ENCODE measurements at regions of chr20 and their contacts with region 1.

Region 1: GRCh38 chr20:20083807-20084206 is 31.5 kb downstream of the CFAP61 start:
- DNase-seq: peak; percentile 64
- ATAC-seq: peak; percentile 87
- H3K4me3 ChIP-seq: no peak overlapping the region
- H3K27ac ChIP-seq: no peak overlapping the region
- H3K4me1 ChIP-seq: no peaks in the 10 kb centered on the region
- H3K27me3 ChIP-seq: peaks cover 60% of the 10 kb centered on the region
- CTCF ChIP-seq: peak; percentile 79

Region 2: DNA sequence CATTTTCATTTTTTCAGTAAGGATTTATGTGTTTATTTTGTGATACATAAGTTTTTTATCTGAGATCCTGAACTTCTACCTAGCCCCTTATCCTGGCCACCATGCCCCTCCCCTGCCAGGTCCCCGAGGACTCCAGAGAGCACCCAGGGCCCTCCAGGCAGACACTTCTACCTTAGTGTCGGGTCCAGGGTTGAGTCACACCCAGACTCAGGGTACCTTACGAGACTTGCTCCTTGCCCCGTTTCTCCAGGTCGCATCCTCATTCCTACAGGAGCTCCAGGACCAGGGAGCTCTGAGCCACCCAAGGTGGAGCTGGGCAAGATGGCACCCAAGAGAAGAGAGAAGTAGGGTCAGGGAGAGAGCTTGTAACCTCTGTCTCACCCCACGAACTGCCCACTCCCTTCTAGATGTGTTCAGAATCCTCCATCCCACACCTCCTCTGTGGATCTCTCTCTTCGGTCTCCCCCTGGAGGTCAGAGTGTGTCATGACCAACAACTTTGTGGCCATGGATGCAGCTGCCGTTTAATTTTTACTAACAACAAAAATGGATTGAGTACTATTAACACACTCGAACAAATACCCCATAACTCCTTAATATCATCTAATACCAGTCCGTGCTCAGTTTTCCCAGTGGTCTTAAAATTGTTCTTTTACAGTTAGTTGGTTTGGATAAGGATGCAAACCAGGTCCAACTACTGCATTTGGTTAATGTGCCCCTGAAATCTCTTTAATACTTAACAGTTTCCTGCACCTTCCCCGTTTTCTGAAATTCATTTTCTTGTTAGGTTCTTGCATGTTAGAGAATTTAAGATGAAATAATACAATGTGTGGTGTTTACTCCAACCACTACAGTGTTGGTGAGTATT is 153.5 kb after region 1 on chr20:
- CTCF ChIA-PET with region 1: no interaction called
- POLR2A ChIA-PET with region 1: no interaction called
- intact Hi-C with region 1: loop called (anchors 1 kb)
- DNase-seq: peak; percentile 68
- ATAC-seq: peak; percentile 69
- H3K4me3 ChIP-seq: no peak overlapping the region
- H3K27ac ChIP-seq: no peak overlapping the region
- H3K4me1 ChIP-seq: no peaks in the 10 kb centered on the region
- H3K27me3 ChIP-seq: peaks cover 65% of the 10 kb centered on the region
- CTCF ChIP-seq: peak; percentile 88

Region 3: DNA sequence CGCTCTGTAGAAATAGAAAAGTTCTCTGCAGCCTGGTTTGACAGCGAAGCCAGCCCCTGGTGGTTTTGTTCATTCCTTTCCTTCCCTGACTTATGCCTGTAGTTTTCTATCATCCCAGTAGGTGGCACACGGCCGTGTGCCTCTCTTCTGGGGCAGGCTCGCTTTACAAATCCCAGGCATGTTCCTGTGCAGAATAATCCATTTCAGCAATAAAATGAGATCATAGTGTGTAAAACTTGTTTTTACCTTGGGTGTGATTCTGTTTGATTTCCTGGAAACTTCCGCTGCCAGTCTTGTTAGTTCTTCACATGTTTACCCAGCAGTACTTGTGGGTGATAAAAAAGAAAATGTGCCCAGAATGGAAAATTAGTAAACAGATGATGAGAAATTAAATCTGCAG is 276.7 kb after region 1 on chr20:
- CTCF ChIA-PET with region 1: no interaction called
- POLR2A ChIA-PET with region 1: no interaction called
- intact Hi-C with region 1: loop called (anchors 2 kb)
- DNase-seq: peak; percentile 89
- ATAC-seq: peak; percentile 93
- H3K4me3 ChIP-seq: no peak overlapping the region
- H3K27ac ChIP-seq: no peak overlapping the region
- H3K4me1 ChIP-seq: peaks cover 5% of the 10 kb centered on the region; the same call in 1 of the 2 replicates
- H3K27me3 ChIP-seq: peaks cover 45% of the 10 kb centered on the region
- CTCF ChIP-seq: peak; percentile 95

Region 4: DNA sequence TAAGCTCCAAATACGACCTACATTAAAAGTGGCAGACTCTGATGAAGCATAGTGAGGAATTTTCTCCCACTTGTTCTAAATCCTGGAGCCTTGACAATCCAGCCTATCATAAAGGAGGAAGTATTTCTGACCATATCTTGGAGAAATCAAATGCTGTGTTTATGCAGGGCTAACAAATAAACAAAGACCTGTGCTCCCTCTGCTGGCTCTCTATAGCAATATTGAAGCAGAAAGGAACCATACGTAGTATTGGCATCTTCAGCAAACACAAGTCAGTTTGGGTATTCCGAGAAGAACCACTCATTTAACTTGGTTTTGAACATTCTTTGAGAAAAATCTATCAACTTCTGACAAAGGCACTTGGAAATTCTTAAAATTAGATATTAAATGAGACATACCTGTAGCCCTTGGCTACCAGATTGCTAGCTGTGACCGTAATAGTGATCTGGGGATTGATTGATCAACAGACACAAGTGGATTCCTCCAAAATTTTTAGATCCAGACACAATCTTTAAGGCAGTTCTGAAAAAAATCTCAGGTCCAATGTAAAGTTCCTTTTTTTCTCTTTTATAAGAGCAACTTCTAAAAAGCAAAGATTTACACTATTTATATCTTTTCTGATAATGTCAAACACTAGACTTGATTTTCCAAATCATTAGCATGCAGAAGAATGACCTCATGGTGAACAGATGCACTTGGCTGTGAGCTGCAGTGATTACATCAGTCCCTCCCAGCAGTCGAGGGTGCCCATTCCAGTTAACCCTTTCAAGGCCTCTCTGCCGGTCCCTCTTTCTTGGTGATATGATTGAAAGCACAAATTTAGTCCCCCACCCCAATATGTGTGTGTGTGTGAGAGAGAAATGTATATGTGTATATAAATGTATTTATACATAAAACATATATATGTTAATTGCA is 324.3 kb after region 1 on chr20:
- CTCF ChIA-PET with region 1: no interaction called
- POLR2A ChIA-PET with region 1: no interaction called
- intact Hi-C with region 1: loop called (anchors 1 kb)
- DNase-seq: peak; percentile 61
- ATAC-seq: peak; percentile 89
- H3K4me3 ChIP-seq: no peak overlapping the region
- H3K27ac ChIP-seq: no peak overlapping the region
- H3K4me1 ChIP-seq: no peaks in the 10 kb centered on the region
- H3K27me3 ChIP-seq: no peaks in the 10 kb centered on the region
- CTCF ChIP-seq: peak; percentile 79

Region 5: GRCh38 chr20:20568604-20569205 is 484.9 kb after region 1 on chr20:
- CTCF ChIA-PET with region 1: interaction called, 4 read pairs
- POLR2A ChIA-PET with region 1: no interaction called
- intact Hi-C with region 1: loop called (anchors 2 kb)
- DNase-seq: peak; percentile 66
- ATAC-seq: peak; percentile 56
- H3K4me3 ChIP-seq: no peak overlapping the region
- H3K27ac ChIP-seq: no peak overlapping the region
- H3K4me1 ChIP-seq: no peaks in the 10 kb centered on the region
- H3K27me3 ChIP-seq: no peaks in the 10 kb centered on the region
- CTCF ChIP-seq: peak; percentile 92

Region 6: DNA sequence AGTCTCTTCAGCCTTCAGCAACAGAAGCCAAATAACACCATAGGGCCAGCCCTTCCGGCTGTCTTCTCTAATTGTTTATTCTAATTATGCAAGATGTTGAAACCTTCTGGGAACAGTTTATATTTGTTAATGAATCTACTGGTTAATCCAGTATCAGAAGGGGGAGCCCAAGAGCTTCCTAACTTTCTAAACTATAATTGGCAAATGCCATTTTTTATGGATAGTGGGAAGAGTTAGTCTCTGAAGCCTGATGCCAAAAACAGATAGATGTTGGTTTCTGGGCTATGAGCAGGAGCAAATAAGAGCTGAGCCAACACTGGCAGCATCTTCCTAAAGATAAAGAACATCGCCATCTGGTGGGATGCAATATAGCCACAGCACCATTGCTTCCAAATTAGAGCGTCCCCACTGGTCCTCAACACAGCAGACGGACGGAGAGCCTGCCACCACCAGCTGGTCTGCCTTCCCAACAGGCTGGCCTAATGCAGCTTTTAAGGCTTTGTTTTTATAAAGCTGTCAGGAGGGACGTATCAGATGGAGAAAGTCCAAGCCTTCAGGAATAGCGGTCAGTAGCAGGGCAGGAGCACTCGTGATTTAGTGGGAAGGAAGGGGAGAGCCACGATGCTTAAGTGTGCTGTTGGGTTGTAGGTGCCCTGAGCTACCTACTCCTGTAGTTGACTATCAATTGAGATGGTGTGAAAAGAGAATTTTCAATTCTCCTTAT is 509.8 kb after region 1 on chr20:
- CTCF ChIA-PET with region 1: interaction called, 3 read pairs
- POLR2A ChIA-PET with region 1: no interaction called
- intact Hi-C with region 1: loop called (anchors 1 kb)
- DNase-seq: peak; percentile 62
- ATAC-seq: peak; percentile 81
- H3K4me3 ChIP-seq: no peak overlapping the region
- H3K27ac ChIP-seq: no peak overlapping the region
- H3K4me1 ChIP-seq: no peaks in the 10 kb centered on the region
- H3K27me3 ChIP-seq: no peaks in the 10 kb centered on the region
- CTCF ChIP-seq: peak; percentile 86

Region 7: GRCh38 chr20:20824924-20825584 is 741.2 kb after region 1 on chr20:
- CTCF ChIA-PET with region 1: no interaction called
- POLR2A ChIA-PET with region 1: no interaction called
- intact Hi-C with region 1: loop called (anchors 5 kb)
- DNase-seq: peak; percentile 55
- ATAC-seq: peak; percentile 75
- H3K4me3 ChIP-seq: no peak overlapping the region
- H3K27ac ChIP-seq: no peak overlapping the region
- H3K4me1 ChIP-seq: no peaks in the 10 kb centered on the region
- H3K27me3 ChIP-seq: peaks cover 46% of the 10 kb centered on the region
- CTCF ChIP-seq: peak; percentile 89